ENCODE measurements at regions of chr7 and their contacts with region 1.

Region 1: GRCh38 chr7:104943502-104944343 is 70.3 kb upstream of the KMT2E start:
- DNase-seq: peak; percentile 76
- ATAC-seq: peak; percentile 51
- H3K4me3 Mint-ChIP-seq: peak overlapping the region; percentile 83
- H3K27ac Mint-ChIP-seq: peak overlapping the region; percentile 100
- H3K4me1 Mint-ChIP-seq: peaks cover 70% of the 10 kb centered on the region
- H3K27me3 Mint-ChIP-seq: no peaks in the 10 kb centered on the region

Region 2: GRCh38 chr7:104931181-104931781 is 12.4 kb before region 1 on chr7:
- CTCF ChIA-PET with region 1: interaction called, 3 read pairs
- POLR2A ChIA-PET with region 1: interaction called, 29 read pairs
- DNase-seq: no peak
- ATAC-seq: no peak
- H3K4me3 Mint-ChIP-seq: no peak overlapping the region
- H3K27ac Mint-ChIP-seq: no peak overlapping the region
- H3K4me1 Mint-ChIP-seq: no peaks in the 10 kb centered on the region
- H3K27me3 Mint-ChIP-seq: no peaks in the 10 kb centered on the region

Region 3: GRCh38 chr7:104956753-104957450 is 13.2 kb after region 1 on chr7:
- CTCF ChIA-PET with region 1: interaction called, 26 read pairs
- POLR2A ChIA-PET with region 1: interaction called, 93 read pairs
- DNase-seq: peak; percentile 69
- ATAC-seq: peak; percentile 86
- H3K4me3 Mint-ChIP-seq: peak overlapping the region; percentile 34
- H3K27ac Mint-ChIP-seq: peak overlapping the region; percentile 89
- H3K4me1 Mint-ChIP-seq: peaks cover 41% of the 10 kb centered on the region
- H3K27me3 Mint-ChIP-seq: no peaks in the 10 kb centered on the region

Region 4: GRCh38 chr7:104971290-104972071 is 27.8 kb after region 1 on chr7:
- CTCF ChIA-PET with region 1: interaction called, 3 read pairs
- POLR2A ChIA-PET with region 1: interaction called, 11 read pairs
- DNase-seq: no peak
- ATAC-seq: no peak
- H3K4me3 Mint-ChIP-seq: no peak overlapping the region
- H3K27ac Mint-ChIP-seq: no peak overlapping the region
- H3K4me1 Mint-ChIP-seq: no peaks in the 10 kb centered on the region
- H3K27me3 Mint-ChIP-seq: no peaks in the 10 kb centered on the region

Measured in activated CD8-positive, alpha-beta T cell treated with anti-CD3 and anti-CD28 coated beads, Interleukin-2, amount 10 ng/mL, durations not matched to agents 7 days and 5 days (primary cell).